Naive thymus-derived CD4-positive, alpha-beta T cell (primary cell): ENCODE measurements at regions of chr10 and their contacts with region 1.

Region 1: GRCh38 chr10:30783939-30784500 is 154.5 kb upstream of the LYZL2 start:
- DNase-seq: peak; percentile 65 to 89 (median 84)
- ATAC-seq: peak; percentile 96
- H3K4me3 ChIP-seq: peak overlapping the region; percentile 64
- H3K4me3 Mint-ChIP-seq: peak overlapping the region; percentile 80 to 92 (median 88)
- H3K27ac ChIP-seq: peak overlapping the region; percentile 64
- H3K27ac Mint-ChIP-seq: peak overlapping the region; percentile 69 to 96 (median 81)
- H3K4me1 ChIP-seq: peaks cover 0 to 16% of the 10 kb centered on the region in 2 donors
- H3K4me1 Mint-ChIP-seq: peaks cover 5 to 30% (median 25%) of the 10 kb centered on the region in 7 donors
- H3K27me3 ChIP-seq: no peaks in the 10 kb centered on the region
- H3K27me3 Mint-ChIP-seq: peaks cover 0 to 2% (median 0%) of the 10 kb centered on the region in 5 donors

Region 2: GRCh38 chr10:30812018-30812851 is 28.2 kb after region 1 on chr10:
- CTCF ChIA-PET with region 1: interaction called, 17 read pairs
- POLR2A ChIA-PET with region 1: interaction called, 20 read pairs
- intact Hi-C with region 1: no loop called
- DNase-seq: peak in 2 of 9 donors; percentile 11 to 15
- ATAC-seq: no peak
- H3K4me3 ChIP-seq: no peak overlapping the region
- H3K4me3 Mint-ChIP-seq: peak overlapping the region; percentile 8 to 64 (median 55)
- H3K27ac ChIP-seq: no peak overlapping the region
- H3K27ac Mint-ChIP-seq: peak overlapping the region; percentile 21 to 84 (median 75)
- H3K4me1 ChIP-seq: peaks cover 0 to 7% of the 10 kb centered on the region in 2 donors
- H3K4me1 Mint-ChIP-seq: peaks cover 20 to 35% (median 29%) of the 10 kb centered on the region in 7 donors
- H3K27me3 ChIP-seq: no peaks in the 10 kb centered on the region
- H3K27me3 Mint-ChIP-seq: no peaks in the 10 kb centered on the region

Region 3: DNA sequence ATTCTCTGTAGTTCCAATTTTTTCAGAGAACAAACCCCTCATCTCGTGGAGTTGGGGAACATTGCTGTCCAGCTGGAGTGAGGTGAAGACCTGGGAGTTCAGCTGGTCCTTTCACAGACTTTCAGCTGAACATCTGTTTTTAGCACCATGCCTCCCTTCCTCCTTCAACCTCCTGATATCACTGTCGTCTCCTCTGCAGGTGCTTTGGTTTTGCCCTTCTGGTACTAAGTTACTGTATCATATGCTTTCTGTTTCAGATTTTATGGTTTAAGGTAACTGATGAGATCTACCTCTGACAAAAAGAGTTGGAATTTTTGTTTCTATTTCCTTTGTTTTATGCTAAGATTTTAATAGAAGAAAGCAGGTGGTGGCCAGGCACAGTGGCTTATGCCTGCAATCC is 144.7 kb after region 1 on chr10:
- CTCF ChIA-PET with region 1: no interaction called
- POLR2A ChIA-PET with region 1: no interaction called
- intact Hi-C with region 1: loop called in 1 of 2 experiments (anchors 2 kb)
- DNase-seq: peak in 5 of 9 donors; percentile 4 to 23 (median 7)
- ATAC-seq: no peak
- H3K4me3 ChIP-seq: peak overlapping the region; percentile 16
- H3K4me3 Mint-ChIP-seq: peak overlapping the region; percentile 69 to 89 (median 83)
- H3K27ac ChIP-seq: peak overlapping the region; percentile 30
- H3K27ac Mint-ChIP-seq: peak overlapping the region; percentile 80 to 92 (median 84)
- H3K4me1 ChIP-seq: no peaks in the 10 kb centered on the region
- H3K4me1 Mint-ChIP-seq: peaks cover 3 to 13% (median 12%) of the 10 kb centered on the region in 7 donors
- H3K27me3 ChIP-seq: no peaks in the 10 kb centered on the region
- H3K27me3 Mint-ChIP-seq: no peaks in the 10 kb centered on the region

Region 4: GRCh38 chr10:31041011-31041410 is 257.0 kb after region 1 on chr10:
- CTCF ChIA-PET with region 1: no interaction called
- POLR2A ChIA-PET with region 1: no interaction called
- intact Hi-C with region 1: no loop called
- DNase-seq: no peak
- ATAC-seq: no peak
- H3K4me3 ChIP-seq: no peak overlapping the region
- H3K4me3 Mint-ChIP-seq: no peak overlapping the region
- H3K27ac ChIP-seq: no peak overlapping the region
- H3K27ac Mint-ChIP-seq: no peak overlapping the region
- H3K4me1 ChIP-seq: no peaks in the 10 kb centered on the region
- H3K4me1 Mint-ChIP-seq: peaks cover 0 to 13% (median 3%) of the 10 kb centered on the region in 7 donors
- H3K27me3 ChIP-seq: no peaks in the 10 kb centered on the region
- H3K27me3 Mint-ChIP-seq: peaks cover 0 to 1% (median 0%) of the 10 kb centered on the region in 5 donors

Region 5: DNA sequence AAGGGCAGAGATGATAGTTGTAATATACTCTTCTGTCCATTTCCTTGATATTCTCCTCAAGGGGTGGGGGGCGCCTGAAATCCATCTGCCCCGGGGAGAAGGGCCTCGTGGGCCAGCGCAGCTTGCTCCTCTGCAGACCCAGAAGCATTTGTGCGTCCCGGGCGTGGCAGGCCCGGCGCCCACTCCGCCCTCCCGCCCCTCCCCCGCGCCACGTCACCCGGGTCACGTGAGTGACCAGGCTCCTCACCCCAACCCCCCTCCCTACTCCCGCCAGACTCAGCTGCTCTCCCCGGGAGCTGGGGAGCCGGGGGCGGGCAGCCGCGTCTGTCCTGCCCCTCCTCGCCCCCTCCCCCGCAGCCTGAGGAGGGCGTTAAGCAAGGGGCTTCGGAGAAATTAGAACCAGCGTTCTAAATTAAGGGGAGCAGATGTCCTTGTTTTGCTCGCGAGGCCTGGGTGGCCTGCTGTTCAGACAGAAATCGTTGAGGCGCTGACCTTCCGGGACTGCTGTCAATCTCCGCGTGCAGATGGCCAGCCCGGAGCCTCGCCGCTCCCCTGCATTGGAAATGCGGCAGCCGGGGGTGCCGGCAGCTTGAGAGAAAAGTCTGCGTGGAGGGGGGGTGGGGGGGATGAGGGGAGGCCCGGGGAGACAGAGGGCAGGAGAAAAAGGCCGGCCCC is 349.7 kb after region 1 on chr10:
- CTCF ChIA-PET with region 1: no interaction called
- POLR2A ChIA-PET with region 1: interaction called, 3 read pairs
- intact Hi-C with region 1: loop called (anchors 1 kb)
- DNase-seq: peak; percentile 14 to 67 (median 38)
- ATAC-seq: peak; percentile 78
- H3K4me3 ChIP-seq: peak overlapping the region; percentile 66
- H3K4me3 Mint-ChIP-seq: peak overlapping the region; percentile 71 to 87 (median 82)
- H3K27ac ChIP-seq: peak overlapping the region; percentile 80
- H3K27ac Mint-ChIP-seq: peak overlapping the region; percentile 72 to 92 (median 87)
- H3K4me1 ChIP-seq: peaks cover 0 to 33% of the 10 kb centered on the region in 2 donors
- H3K4me1 Mint-ChIP-seq: peaks cover 18 to 68% (median 44%) of the 10 kb centered on the region in 7 donors
- H3K27me3 ChIP-seq: no peaks in the 10 kb centered on the region
- H3K27me3 Mint-ChIP-seq: no peaks in the 10 kb centered on the region

Region 6: DNA sequence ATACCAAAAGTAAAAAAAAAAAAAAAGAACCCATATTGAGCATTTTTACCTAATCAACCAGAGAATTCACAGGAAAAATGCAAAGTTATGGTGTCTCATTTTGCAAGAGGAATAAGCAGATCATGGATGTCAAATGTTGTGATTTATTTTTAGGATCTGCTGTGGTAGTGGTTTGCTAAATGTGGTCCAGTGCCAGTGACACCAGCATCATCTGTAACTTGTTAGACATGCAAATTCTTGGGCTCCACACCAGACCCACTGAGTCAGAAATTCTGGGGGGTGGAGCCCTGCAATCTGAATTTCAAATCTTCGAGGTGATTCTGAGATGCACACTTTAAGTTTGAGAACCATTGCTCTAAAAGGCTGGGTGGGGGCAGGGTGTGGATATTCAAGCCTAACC is 504.9 kb after region 1 on chr10:
- CTCF ChIA-PET with region 1: no interaction called
- POLR2A ChIA-PET with region 1: no interaction called
- intact Hi-C with region 1: no loop called
- DNase-seq: no peak
- ATAC-seq: no peak
- H3K4me3 ChIP-seq: no peak overlapping the region
- H3K4me3 Mint-ChIP-seq: no peak overlapping the region
- H3K27ac ChIP-seq: no peak overlapping the region
- H3K27ac Mint-ChIP-seq: no peak overlapping the region
- H3K4me1 ChIP-seq: no peaks in the 10 kb centered on the region
- H3K4me1 Mint-ChIP-seq: peaks cover 0 to 2% (median 0%) of the 10 kb centered on the region in 7 donors
- H3K27me3 ChIP-seq: no peaks in the 10 kb centered on the region
- H3K27me3 Mint-ChIP-seq: peaks cover 0 to 3% (median 0%) of the 10 kb centered on the region in 5 donors

Region 7: GRCh38 chr10:31603235-31604087 is 819.4 kb after region 1 on chr10:
- CTCF ChIA-PET with region 1: no interaction called
- POLR2A ChIA-PET with region 1: no interaction called
- intact Hi-C with region 1: loop called in 1 of 2 experiments (anchors 5 kb)
- DNase-seq: peak; percentile 15 to 91 (median 38)
- ATAC-seq: peak; percentile 93
- H3K4me3 ChIP-seq: peak overlapping the region; percentile 61
- H3K4me3 Mint-ChIP-seq: peak overlapping the region in 9 of 10 donors; percentile 86 to 94 (median 88)
- H3K27ac ChIP-seq: no peak overlapping the region
- H3K27ac Mint-ChIP-seq: peak overlapping the region in 3 of 9 donors; percentile 36 to 74 (median 53)
- H3K4me1 ChIP-seq: peaks cover 9 to 12% of the 10 kb centered on the region in 2 donors
- H3K4me1 Mint-ChIP-seq: peaks cover 0 to 20% (median 11%) of the 10 kb centered on the region in 7 donors
- H3K27me3 ChIP-seq: no peaks in the 10 kb centered on the region
- H3K27me3 Mint-ChIP-seq: peaks cover 0 to 2% (median 0%) of the 10 kb centered on the region in 5 donors

Region 8: GRCh38 chr10:31928549-31929260 is 1144.7 kb after region 1 on chr10 and contains the start of gene ARHGAP12:
- CTCF ChIA-PET with region 1: no interaction called
- POLR2A ChIA-PET with region 1: no interaction called
- intact Hi-C with region 1: loop called in 1 of 2 experiments (anchors 5 kb)
- DNase-seq: peak; percentile 76 to 90 (median 85)
- ATAC-seq: peak; percentile 87
- H3K4me3 ChIP-seq: peak within 1 kb of the TSS; percentile 90
- H3K4me3 Mint-ChIP-seq: peak within 1 kb of the TSS; percentile 73 to 95 (median 92)
- H3K27ac ChIP-seq: peak within 1 kb of the TSS; percentile 84
- H3K27ac Mint-ChIP-seq: peak within 1 kb of the TSS; percentile 66 to 93 (median 86)
- H3K4me1 ChIP-seq: peaks cover 10% of the 10 kb centered on the region in 2 donors
- H3K4me1 Mint-ChIP-seq: peaks cover 30 to 51% (median 47%) of the 10 kb centered on the region in 7 donors
- H3K27me3 ChIP-seq: no peaks in the 10 kb centered on the region
- H3K27me3 Mint-ChIP-seq: peaks cover 0 to 9% (median 0%) of the 10 kb centered on the region in 5 donors
- total RNA-seq, gene ARHGAP12: 10.6 to 34.6 (median 31.4) TPM